ENCODE measurements at regions of chr6 and their contacts with region 1.

Region 1: DNA sequence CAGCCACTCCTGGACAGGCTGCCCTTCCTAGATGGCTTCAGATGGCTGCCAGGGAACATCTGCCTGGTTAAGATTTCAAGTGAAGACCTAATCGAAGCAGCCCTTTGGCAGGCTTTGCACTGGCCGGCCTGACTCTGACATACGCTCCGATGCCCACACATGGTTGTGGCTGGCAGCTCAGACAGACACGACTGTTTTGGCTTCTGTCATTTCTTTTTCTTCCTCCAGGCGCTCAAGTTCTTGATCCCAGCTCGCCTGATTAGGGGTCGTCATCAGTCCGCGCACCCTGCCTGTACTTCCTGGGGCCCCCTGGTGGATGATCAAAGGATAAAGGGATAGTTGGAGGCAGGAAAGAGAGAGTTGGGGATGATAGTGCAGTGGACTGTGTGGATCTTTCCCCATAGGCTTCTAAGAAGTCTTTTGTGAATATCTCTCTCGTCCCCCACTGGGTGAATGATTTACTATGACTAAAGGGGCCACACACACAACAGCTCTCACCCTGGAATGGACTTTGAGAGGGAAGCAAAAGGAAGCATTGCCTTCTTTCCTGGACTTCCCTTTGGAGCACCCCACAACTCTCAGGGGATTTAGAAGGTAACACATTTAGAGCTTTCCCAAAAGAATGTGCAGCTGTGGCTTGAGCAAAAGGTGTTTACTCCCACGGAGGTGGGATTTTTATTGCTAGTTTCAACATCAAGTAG is 21.4 kb upstream of the TRAM2 start:
- DNase-seq: peak; percentile 50
- ATAC-seq: peak; percentile 57
- H3K4me3 Mint-ChIP-seq: no peak overlapping the region
- H3K27ac Mint-ChIP-seq: no peak overlapping the region
- H3K4me1 Mint-ChIP-seq: peaks cover 12% of the 10 kb centered on the region
- H3K27me3 Mint-ChIP-seq: peaks cover 14% of the 10 kb centered on the region

Region 2: GRCh38 chr6:52577022-52577777 is 21.1 kb before region 1 on chr6 and contains the start of gene TRAM2:
- CTCF ChIA-PET with region 1: interaction called, 17 read pairs
- POLR2A ChIA-PET with region 1: interaction called, 3 read pairs
- DNase-seq: peak; percentile 66
- ATAC-seq: peak; percentile 79
- H3K4me3 Mint-ChIP-seq: peak within 1 kb of the TSS; percentile 73
- H3K27ac Mint-ChIP-seq: peak within 1 kb of the TSS; percentile 66
- H3K4me1 Mint-ChIP-seq: peaks cover 33% of the 10 kb centered on the region
- H3K27me3 Mint-ChIP-seq: peaks cover 45% of the 10 kb centered on the region
- total RNA-seq, gene TRAM2: 1.4 TPM

Measured in activated CD8-positive, alpha-beta T cell treated with anti-CD3 and anti-CD28 coated beads, Interleukin-2, amount 10 ng/mL, durations not matched to agents 7 days and 5 days (primary cell).